ENCODE measurements at regions of chr19 and their contacts with region 1.

Region 1: DNA sequence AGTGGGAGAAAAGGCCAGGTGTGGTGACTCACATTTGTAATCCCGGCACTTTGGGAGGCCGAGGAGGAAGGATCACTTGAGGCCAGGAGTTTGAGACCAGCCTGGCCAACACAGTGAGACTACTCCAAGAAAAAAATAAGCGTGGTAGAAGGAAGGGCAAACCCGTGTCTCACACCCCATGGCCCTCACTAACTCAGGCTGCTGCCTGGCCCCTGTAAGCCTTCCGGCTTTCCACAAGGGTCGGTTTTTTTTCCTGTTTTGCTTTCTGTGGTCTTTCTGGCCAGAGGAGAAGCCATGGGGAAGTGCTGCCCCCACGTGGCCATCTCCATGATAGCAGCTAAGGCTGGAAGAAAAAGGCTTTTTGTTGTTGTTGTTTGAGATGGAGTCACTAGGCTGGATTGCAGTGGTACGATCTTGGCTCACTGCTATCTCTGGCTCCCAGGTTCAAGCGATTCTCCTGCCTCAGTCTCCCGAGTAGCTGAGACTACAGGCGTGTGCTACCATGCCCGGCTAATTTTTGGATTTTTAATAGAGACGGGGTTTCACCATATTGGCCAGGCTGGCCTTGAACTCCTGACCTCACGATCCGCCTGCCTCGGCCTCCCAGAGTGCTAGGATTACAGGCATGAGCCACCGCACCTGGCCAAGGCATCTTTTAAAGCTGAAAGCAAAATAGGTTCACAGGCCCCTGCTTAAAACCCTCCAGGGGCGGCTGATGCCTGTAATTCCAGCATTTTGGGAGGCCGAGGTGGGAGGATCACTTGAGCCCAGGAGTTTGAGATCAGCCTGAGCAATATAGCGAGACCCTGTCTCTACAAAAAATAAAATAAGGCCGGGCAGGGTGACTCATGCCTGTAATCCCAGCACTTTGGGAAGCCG is 7.5 kb upstream of the ARHGEF18 start:
- DNase-seq: peak; percentile 52
- ATAC-seq: peak; percentile 38; the same call in 1 of the 2 replicates
- H3K4me3 ChIP-seq: no peak overlapping the region
- H3K27ac ChIP-seq: no peak overlapping the region
- H3K4me1 ChIP-seq: no peaks in the 10 kb centered on the region
- H3K27me3 ChIP-seq: no peaks in the 10 kb centered on the region
- CTCF ChIP-seq: peak; percentile 89

Region 2: DNA sequence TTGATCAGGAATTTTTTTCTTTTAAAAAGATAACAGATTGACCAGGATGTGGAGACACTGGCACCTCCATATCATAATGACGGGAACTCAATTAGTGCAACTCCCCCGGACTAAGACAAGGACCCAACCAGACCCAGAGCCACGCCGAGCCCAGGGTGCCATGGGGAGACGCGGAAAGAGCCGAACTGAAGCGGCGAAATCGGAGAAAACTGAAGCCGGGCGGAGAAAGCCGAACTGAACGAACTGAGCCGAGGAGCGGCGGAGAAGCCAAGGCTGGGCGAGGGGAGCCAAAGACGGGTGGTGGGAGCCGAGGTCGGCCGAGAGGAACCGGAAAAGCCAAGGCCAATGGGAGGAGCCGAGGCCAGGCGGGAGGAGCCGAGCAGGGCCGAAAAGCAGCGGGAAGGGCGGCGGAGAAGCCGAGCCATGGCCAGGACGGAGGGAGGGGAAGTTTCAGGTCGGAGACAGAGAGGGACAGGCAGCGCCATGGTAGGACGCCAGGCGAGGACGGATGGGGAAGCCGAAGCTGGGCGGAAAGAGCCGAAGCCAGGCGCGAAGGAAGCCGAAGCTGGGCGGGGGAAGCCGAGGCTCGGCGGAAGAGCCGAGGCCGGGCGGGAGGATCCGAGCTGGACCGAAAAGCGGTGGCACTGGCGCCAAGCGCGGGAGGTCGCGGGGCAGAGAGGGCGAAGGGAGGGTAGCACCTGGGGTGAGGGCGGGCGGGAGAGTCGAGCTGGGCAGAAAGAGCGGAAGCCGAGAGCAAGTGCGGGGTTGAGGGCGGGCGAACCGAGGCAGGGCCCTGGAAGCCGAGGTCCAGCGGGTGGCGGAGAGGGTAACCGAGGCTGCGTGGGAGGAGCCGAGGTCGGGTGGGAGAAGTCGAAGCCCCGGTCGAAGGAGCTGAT is 242.2 kb before region 1 on chr19:
- CTCF ChIA-PET with region 1: interaction called, 12 read pairs
- POLR2A ChIA-PET with region 1: no interaction called
- in situ Hi-C with region 1: no loop called
- intact Hi-C with region 1: loop called (anchors 2 kb)
- DNase-seq: peak; percentile 53
- ATAC-seq: peak; percentile 95
- H3K4me3 ChIP-seq: peak overlapping the region; percentile 66 to 71
- H3K27ac ChIP-seq: peak overlapping the region; percentile 89
- H3K4me1 ChIP-seq: no peaks in the 10 kb centered on the region; the same call in 1 of the 2 replicates
- H3K27me3 ChIP-seq: no peaks in the 10 kb centered on the region
- CTCF ChIP-seq: no peak

Region 3: DNA sequence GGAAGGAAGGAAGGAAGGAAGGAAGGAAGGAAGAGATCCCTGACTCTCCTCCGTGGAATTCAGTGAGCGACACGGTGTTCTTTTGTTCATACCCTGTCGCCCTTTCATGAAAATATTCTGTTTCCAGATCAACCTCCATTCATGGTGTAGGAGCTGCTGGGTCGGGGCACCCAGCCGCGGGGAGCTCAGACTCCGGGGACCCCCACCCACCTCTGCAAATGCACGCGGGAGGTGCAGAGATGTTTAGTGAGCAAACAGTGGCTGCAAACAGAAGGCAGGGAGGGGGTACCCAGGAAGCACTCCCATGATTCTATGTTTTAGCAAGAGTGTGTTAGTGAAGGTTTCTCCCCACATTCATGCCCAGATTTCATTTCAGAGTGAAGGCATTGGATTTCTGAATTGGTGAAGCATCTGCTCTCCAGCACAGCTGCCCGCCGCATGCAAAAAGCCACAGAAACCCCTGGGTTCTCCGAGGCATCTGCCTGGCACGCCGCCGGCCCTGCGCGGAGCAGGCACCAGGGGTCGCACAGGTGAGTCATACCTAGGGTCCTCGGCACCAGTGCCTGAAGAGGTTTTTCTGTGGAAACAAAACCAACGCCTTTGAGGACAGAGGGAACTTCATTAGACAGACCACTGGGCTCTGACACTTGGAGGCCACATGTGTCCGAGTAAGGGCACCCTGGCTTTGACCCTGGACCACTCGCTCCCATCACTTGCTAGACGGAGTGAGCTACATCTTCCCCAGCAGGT is 191.1 kb before region 1 on chr19:
- CTCF ChIA-PET with region 1: no interaction called
- POLR2A ChIA-PET with region 1: no interaction called
- in situ Hi-C with region 1: no loop called
- intact Hi-C with region 1: loop called (anchors 2 kb)
- DNase-seq: no peak
- ATAC-seq: no peak
- H3K4me3 ChIP-seq: no peak overlapping the region
- H3K27ac ChIP-seq: no peak overlapping the region
- H3K4me1 ChIP-seq: no peaks in the 10 kb centered on the region
- H3K27me3 ChIP-seq: no peaks in the 10 kb centered on the region
- CTCF ChIP-seq: no peak

Region 4: GRCh38 chr19:7304200-7304599 is 37.0 kb before region 1 on chr19:
- CTCF ChIA-PET with region 1: no interaction called
- POLR2A ChIA-PET with region 1: no interaction called
- in situ Hi-C with region 1: no loop called
- intact Hi-C with region 1: no loop called
- DNase-seq: no peak
- ATAC-seq: no peak
- H3K4me3 ChIP-seq: no peak overlapping the region
- H3K27ac ChIP-seq: no peak overlapping the region
- H3K4me1 ChIP-seq: no peaks in the 10 kb centered on the region
- H3K27me3 ChIP-seq: no peaks in the 10 kb centered on the region
- CTCF ChIP-seq: no peak

Measured in Panc1 (cell line).